Endothelial cell of umbilical vein (primary cell): ENCODE measurements at regions of chrX and their contacts with region 1.

Region 1: DNA sequence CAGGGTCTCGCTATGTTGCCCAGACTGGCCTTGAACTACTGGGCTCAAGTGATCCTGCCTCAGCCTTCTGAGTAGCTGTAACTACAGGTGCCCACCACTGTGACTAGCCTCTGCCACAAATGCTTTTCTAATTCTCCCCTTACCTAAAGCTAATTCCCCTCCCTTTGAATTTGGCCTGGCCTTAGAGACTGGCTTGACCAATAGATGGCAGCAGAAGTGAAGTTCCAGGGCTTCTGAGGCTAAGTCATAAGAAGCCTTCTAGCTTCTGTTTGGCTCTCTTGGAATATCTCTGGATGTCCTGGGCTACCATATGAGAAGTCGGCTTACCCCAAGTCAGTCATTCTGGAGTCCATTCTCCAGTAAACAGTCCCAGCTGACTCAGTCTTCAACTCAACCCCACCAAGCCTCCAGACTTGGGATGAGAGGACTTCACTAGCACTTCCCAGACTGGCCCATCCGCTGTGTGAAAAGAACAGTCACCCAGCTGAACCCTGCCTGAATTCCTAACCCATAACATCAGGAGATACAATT is 61.0 kb downstream of the HPRT1 start:
- DNase-seq: peak; percentile 78
- H3K4me3 ChIP-seq: no peak overlapping the region
- H3K27ac ChIP-seq: no peak overlapping the region
- H3K4me1 ChIP-seq: peaks cover 16% of the 10 kb centered on the region
- H3K27me3 ChIP-seq: no peaks in the 10 kb centered on the region
- CTCF ChIP-seq: peak; percentile 47 to 62
- POLR2A ChIP-seq: no peak

Region 2: DNA sequence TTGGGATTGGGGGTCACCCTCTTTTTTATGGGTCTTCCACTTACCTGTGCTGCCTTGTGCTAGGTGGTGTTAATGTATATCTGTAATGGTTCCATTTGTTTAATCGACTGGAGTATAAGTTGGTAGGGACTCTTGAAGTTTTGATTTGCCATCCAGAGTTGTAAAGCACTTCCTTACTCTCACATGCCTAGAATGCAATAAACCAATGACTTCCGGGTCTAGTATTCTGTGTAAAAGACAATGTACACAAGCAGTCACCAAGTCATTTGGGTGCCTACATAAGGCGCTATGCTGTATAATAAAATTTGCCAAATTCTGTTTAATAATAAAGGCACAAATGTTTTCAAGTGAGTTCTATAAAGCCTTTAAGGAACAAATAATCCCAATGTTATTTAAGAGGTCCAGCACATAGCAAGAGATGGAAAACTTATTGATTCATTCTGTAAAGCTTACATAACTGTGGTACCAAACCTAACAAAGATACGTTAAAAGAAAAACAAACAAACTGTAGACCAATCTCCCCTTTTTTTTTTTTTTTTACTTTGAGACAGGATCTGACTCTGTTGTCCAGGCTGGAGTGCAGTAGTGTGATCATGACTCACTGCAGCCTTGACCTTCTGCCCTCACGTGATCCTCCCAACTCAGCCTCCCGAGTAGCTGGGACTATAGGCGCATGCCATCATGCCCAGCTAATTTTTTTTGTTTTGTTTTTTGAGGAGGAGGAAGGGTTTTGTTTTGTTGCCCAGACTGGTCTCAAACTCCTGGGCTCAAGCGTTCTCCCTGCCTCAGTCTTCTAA is 102.4 kb before region 1 on chrX:
- CTCF ChIA-PET with region 1: no interaction called
- POLR2A ChIA-PET with region 1: no interaction called
- dilution Hi-C with region 1: no loop called
- intact Hi-C with region 1: no loop called
- DNase-seq: no peak
- H3K4me3 ChIP-seq: no peak overlapping the region
- H3K27ac ChIP-seq: no peak overlapping the region
- H3K4me1 ChIP-seq: no peaks in the 10 kb centered on the region
- H3K27me3 ChIP-seq: no peaks in the 10 kb centered on the region
- CTCF ChIP-seq: no peak
- POLR2A ChIP-seq: no peak

Region 3: GRCh38 chrX:134484039-134484438 is 36.9 kb before region 1 on chrX:
- CTCF ChIA-PET with region 1: interaction called, 17 read pairs
- POLR2A ChIA-PET with region 1: no interaction called
- dilution Hi-C with region 1: no loop called
- intact Hi-C with region 1: no loop called
- DNase-seq: peak; percentile 78
- H3K4me3 ChIP-seq: no peak overlapping the region
- H3K27ac ChIP-seq: no peak overlapping the region
- H3K4me1 ChIP-seq: no peaks in the 10 kb centered on the region
- H3K27me3 ChIP-seq: no peaks in the 10 kb centered on the region
- CTCF ChIP-seq: peak in 1 of 2 donors; percentile 15
- POLR2A ChIP-seq: no peak

Region 4: DNA sequence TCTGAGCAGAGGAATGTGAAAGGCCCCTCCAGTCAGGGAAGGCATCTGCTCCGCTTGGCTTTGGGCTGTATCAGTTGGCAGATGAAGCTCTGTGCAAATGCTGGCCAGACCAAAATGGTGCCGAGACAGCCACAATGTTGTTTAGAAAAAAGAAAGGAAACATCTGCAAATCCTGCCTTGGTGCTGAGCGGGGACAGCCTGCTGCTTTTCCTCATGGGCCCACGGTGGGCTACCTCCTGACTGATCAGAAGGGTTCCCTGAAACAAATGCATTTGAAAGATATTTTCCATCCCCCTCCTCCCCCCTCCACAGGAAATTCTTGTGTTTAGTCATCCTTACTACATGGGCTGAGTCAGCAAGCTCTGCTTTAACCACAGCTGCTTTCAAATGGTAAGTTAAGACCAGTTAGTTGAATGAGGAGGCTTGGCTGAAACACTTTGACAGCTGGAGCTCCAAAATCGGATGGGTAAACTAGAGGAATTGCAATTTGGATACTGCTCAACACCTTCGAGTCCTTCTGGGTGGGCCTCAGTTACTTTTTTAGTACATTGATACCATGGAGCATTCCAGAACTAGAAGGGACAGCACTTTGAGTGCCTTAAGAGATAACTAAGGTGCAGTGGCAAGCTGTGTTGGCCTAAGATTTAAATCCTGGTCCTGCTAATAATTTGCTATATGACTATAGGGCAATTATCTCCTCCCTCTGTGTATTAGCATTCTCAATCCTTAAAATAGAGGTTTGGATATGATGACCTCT is 101.3 kb after region 1 on chrX:
- CTCF ChIA-PET with region 1: interaction called, 19 read pairs
- POLR2A ChIA-PET with region 1: no interaction called
- dilution Hi-C with region 1: no loop called
- intact Hi-C with region 1: loop called (anchors 1 kb)
- DNase-seq: peak; percentile 92
- H3K4me3 ChIP-seq: peak overlapping the region in 1 of 3 experiments; percentile 10
- H3K27ac ChIP-seq: peak overlapping the region; percentile 94
- H3K4me1 ChIP-seq: peaks cover 49% of the 10 kb centered on the region
- H3K27me3 ChIP-seq: no peaks in the 10 kb centered on the region
- CTCF ChIP-seq: no peak
- POLR2A ChIP-seq: no peak

Region 5: DNA sequence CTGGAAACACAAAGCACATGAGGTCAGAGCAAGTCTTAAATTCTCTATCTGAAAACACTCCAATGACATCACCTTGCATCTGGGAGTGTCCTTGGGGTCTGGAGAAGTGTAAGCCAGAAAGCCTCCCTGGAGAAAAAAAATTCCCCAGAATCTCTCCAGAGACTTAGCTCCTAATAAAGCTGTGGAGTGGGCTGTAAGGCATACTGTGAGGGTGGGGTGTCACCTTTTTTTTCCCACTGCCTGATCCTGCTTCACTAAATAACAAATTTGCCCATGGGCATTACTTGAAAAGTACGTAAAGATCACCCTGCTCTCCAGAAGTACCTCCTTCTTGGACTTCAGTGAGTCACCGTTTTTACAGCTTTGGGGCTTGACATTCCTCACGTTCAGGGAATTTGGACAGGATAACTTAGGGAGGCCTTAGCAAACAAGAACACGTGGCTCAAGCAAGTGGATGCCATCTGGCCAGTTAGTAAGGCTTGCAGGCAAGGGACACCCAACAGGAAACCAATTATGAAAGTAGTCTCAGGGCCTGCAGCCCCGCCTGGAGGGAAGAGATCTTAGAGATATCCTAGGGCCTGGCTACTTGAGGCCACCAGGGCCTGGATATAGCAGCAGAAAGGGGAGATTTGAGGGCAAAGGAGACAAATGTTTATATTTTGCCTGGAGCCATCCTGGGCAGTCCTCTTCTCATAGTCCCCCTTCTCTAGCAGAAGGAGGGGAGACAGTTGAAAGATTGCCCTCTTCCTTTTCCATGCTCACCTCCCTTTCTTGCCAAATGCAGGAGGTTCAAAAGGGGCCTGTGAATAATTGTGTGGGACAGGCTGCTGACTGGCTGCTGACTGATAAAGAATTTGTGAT is 197.4 kb after region 1 on chrX:
- CTCF ChIA-PET with region 1: interaction called, 5 read pairs
- POLR2A ChIA-PET with region 1: no interaction called
- dilution Hi-C with region 1: no loop called
- intact Hi-C with region 1: loop called (anchors 2 kb)
- DNase-seq: peak; percentile 94
- H3K4me3 ChIP-seq: no peak overlapping the region
- H3K27ac ChIP-seq: peak overlapping the region; percentile 89
- H3K4me1 ChIP-seq: peaks cover 21% of the 10 kb centered on the region
- H3K27me3 ChIP-seq: no peaks in the 10 kb centered on the region
- CTCF ChIP-seq: no peak
- POLR2A ChIP-seq: no peak

Region 6: GRCh38 chrX:134753718-134754008 is 232.7 kb after region 1 on chrX:
- CTCF ChIA-PET with region 1: interaction called, 37 read pairs
- POLR2A ChIA-PET with region 1: no interaction called
- dilution Hi-C with region 1: no loop called
- intact Hi-C with region 1: loop called (anchors 1 kb)
- DNase-seq: peak; percentile 53
- H3K4me3 ChIP-seq: no peak overlapping the region
- H3K27ac ChIP-seq: no peak overlapping the region
- H3K4me1 ChIP-seq: no peaks in the 10 kb centered on the region
- H3K27me3 ChIP-seq: no peaks in the 10 kb centered on the region
- CTCF ChIP-seq: peak in 1 of 2 donors; percentile 5
- POLR2A ChIP-seq: no peak

Region 7: DNA sequence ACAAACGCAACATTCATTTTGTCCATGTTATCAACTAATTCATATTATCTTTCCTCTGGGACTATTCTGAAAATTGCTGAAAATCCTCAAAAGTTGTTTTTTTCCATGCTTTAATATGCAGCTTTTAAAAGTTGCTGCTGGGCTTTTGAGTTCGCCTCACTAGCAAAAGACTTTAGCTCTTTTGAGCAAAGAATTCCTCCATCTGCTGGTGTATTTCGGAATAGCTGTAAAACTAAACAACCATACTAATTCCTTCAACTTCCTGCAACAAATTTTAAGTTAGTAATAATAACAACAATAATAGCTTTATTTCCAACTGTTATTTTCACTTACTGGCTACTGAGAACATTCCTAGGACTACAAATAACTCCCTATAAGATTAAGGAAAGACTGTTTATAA is 261.9 kb after region 1 on chrX:
- CTCF ChIA-PET with region 1: interaction called, 35 read pairs
- POLR2A ChIA-PET with region 1: no interaction called
- dilution Hi-C with region 1: no loop called
- intact Hi-C with region 1: no loop called
- DNase-seq: peak; percentile 54
- H3K4me3 ChIP-seq: no peak overlapping the region
- H3K27ac ChIP-seq: no peak overlapping the region
- H3K4me1 ChIP-seq: no peaks in the 10 kb centered on the region
- H3K27me3 ChIP-seq: no peaks in the 10 kb centered on the region
- CTCF ChIP-seq: peak; percentile 21 to 23
- POLR2A ChIP-seq: no peak